HCT116 (cell line): ENCODE measurements at regions of chr15 and their contacts with region 1.

Region 1: DNA sequence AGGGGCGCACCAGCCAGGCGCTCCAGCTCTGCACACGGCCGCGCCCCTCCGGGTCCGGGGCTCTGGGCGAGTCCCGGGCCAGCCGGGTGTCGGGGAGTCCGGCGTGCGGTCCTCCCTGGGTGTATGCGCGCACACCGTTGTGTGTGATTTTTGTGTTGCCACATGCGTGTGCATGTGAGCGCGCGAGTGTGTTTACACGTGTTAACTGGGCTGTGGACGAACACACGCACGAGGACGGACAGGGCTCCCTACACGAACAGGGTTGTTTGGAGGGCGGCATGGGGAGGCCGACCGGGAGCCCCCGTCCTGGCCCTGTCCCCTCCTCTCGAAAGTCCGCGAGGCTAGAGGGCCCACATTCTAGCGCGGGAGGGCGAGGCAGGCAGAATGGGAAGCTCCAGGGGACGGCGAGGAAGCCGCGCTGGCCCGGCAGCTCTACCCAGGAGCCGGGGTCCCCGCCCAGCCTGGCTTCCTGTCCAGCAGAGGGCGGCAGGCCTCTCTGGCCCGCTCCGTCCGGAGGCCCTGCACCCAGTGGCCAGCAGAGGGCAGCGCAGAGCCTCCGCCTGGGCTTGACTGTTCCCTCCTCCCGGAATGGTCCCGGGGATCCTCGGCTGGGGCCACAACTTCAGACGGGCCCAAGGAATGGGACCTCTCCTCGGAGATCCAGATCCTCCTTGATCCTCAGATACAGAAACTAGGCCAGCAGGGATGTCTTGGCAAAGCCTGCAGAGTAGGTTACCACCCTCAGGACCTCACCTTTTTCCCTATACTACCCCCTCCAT is 611 bp upstream of the LINGO1 start:
- DNase-seq: peak; percentile 74
- ATAC-seq: peak; percentile 89
- H3K4me3 ChIP-seq: peak overlapping the region; percentile 48 to 71
- H3K27ac ChIP-seq: peak overlapping the region; percentile 44; the same call in 1 of the 2 replicates
- H3K4me1 ChIP-seq: peaks cover 11 to 29% of the 10 kb centered on the region in 2 experiments; a peak in 3 of 4 replicates
- H3K27me3 ChIP-seq: no peaks in the 10 kb centered on the region
- CTCF ChIP-seq: peak; percentile 99 to 100 (median 100)
- POLR2A ChIP-seq: no peak
- RAD21 ChIP-seq: peak; percentile 92

Region 2: DNA sequence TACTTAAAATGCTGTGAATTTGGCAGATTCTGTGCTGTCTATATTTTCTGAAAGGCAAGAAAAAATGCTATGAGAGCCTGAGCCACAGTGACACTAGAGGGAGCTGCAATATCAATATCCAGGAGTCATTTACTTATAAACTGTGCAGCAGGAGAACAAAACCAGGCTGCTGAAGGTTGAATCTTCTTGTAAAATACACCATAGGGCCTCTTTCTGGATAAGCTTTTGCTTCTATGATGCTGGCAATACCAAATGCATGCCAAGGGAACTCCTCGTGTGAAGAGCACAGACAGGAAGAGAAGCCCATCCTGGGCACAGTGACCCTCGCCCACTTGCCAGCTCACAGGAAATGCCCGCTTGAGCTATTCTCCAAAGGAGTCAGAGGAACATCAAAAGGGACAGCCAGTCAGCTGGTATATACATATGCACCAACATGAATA is 514.4 kb before region 1 on chr15:
- CTCF ChIA-PET with region 1: interaction called, 9 read pairs
- POLR2A ChIA-PET with region 1: no interaction called
- RAD21 ChIA-PET with region 1: interaction called in 1 of 2 experiments, 3 read pairs
- intact Hi-C with region 1: loop called (anchors 2 kb)
- DNase-seq: peak; percentile 36
- ATAC-seq: peak; percentile 83
- H3K4me3 ChIP-seq: no peak overlapping the region
- H3K27ac ChIP-seq: no peak overlapping the region
- H3K4me1 ChIP-seq: 0 out of 4 replicates have a peak, but pooled peaks cover 0 to 3% of the 10 kb centered on the region in 2 experiments
- H3K27me3 ChIP-seq: no peaks in the 10 kb centered on the region
- CTCF ChIP-seq: peak; percentile 72 to 77 (median 75)
- POLR2A ChIP-seq: no peak
- RAD21 ChIP-seq: peak; percentile 81

Region 3: DNA sequence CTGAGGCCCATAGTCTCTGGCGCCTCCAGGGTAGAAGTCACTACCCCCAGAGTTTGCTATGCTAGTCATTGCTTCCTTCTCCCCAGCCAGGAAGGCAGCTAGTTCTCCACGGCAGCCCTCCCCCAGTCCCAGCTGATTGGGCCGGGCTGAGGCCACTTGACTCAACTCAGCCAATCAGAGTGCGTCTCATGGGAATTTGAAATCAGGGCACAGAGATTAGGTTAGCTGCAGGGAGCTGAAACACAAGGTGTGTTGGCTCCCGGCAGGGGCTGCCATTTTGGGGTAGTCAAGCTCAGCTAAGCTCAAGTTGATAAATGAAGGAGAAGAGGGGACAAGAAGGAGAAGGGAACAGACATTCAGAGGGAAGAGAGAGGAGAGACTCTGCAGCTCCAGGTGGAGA is 33.4 kb before region 1 on chr15:
- CTCF ChIA-PET with region 1: interaction called, 12 read pairs
- POLR2A ChIA-PET with region 1: no interaction called
- RAD21 ChIA-PET with region 1: no interaction called
- intact Hi-C with region 1: no loop called
- DNase-seq: peak; percentile 61
- ATAC-seq: peak; percentile 92
- H3K4me3 ChIP-seq: peak overlapping the region; percentile 24 to 33
- H3K27ac ChIP-seq: peak overlapping the region; percentile 44; the same call in 1 of the 2 replicates
- H3K4me1 ChIP-seq: peaks cover 2 to 14% of the 10 kb centered on the region in 2 experiments; a peak in 3 of 4 replicates
- H3K27me3 ChIP-seq: no peaks in the 10 kb centered on the region
- CTCF ChIP-seq: no peak
- POLR2A ChIP-seq: peak; percentile 74
- RAD21 ChIP-seq: no peak

Region 4: GRCh38 chr15:77617476-77618230 is 15.7 kb before region 1 on chr15:
- CTCF ChIA-PET with region 1: interaction called, 15 read pairs
- POLR2A ChIA-PET with region 1: interaction called, 7 read pairs
- RAD21 ChIA-PET with region 1: no interaction called
- intact Hi-C with region 1: no loop called
- DNase-seq: peak; percentile 13
- ATAC-seq: peak; percentile 89
- H3K4me3 ChIP-seq: no peak overlapping the region
- H3K27ac ChIP-seq: no peak overlapping the region
- H3K4me1 ChIP-seq: peaks cover 0 to 3% of the 10 kb centered on the region in 2 experiments; a peak in 2 of 4 replicates
- H3K27me3 ChIP-seq: no peaks in the 10 kb centered on the region
- CTCF ChIP-seq: peak; percentile 42 to 82 (median 79); a peak in 5 of 6 replicates
- POLR2A ChIP-seq: no peak
- RAD21 ChIP-seq: peak; percentile 30

Region 5: DNA sequence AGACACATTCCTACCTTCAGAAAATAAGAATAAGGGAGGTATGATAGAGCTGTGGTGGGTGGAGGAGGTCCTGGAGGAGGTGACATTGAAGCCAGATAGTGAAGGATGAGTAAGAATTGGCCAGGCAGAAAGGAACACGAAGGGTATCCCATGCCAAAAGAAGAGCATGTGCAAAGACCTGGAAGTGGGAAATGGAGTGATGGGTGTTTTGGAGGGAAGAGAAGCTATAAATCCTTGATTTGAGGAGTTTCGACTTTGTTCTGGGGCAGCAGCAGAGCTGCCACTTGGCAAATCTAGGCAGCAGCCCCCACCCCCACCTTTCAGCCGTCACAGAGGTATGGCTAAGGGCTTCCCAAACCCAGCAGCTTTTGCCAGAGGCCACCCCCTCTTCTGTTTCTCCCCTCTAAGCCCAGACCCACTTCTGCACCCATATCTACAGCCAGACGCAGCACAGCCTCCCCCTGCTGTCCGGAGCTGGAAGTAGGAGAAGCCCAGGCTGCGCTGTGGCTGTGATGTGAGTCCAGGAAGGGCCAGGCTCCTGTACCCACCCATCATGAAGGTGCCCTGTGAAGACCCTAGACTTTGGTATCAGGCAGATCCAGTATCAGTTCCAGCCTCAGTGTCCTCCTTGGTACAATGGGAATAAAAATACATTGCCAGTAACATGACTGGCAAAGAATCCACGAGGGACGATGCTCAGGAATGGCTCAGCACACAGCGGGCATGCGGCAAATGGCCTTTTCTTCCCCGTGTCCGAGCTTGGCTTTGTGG is 188.1 kb after region 1 on chr15:
- CTCF ChIA-PET with region 1: interaction called, 72 read pairs
- POLR2A ChIA-PET with region 1: interaction called, 3 read pairs
- RAD21 ChIA-PET with region 1: interaction called, 5 to 15 read pairs
- intact Hi-C with region 1: loop called (anchors 1 kb)
- DNase-seq: peak; percentile 37
- ATAC-seq: peak; percentile 73
- H3K4me3 ChIP-seq: no peak overlapping the region
- H3K27ac ChIP-seq: no peak overlapping the region
- H3K4me1 ChIP-seq: peaks cover 0 to 12% of the 10 kb centered on the region in 2 experiments; a peak in 2 of 4 replicates
- H3K27me3 ChIP-seq: no peaks in the 10 kb centered on the region; the same call in 1 of the 2 replicates
- CTCF ChIP-seq: peak; percentile 87 to 93 (median 90)
- POLR2A ChIP-seq: no peak
- RAD21 ChIP-seq: peak; percentile 87